ENCODE measurements at regions of chrX and their contacts with region 1.

Region 1: DNA sequence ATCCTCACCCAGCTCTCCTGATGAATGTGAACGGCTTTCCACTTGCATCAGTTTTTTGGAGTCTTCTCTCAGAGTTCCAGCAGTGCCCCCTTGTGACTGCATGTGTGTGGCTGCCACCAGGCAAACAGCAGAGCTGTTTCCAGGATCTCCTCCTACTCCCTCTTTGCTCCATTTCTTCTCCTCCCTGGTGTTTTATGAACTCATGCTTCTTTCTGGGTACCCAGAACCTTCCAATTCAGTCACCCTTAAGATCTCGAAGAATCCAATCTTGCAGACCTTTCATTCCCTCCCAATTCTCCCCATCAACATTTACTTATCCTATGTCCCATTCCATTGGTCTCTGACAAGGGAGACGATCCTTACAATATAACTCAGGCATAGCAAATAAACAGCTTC is 6.8 kb upstream of the TCEANC start:
- DNase-seq: peak; percentile 35
- H3K4me3 Mint-ChIP-seq: no peak overlapping the region
- H3K27ac Mint-ChIP-seq: no peak overlapping the region
- H3K4me1 Mint-ChIP-seq: peaks cover 17% of the 10 kb centered on the region
- H3K27me3 Mint-ChIP-seq: no peaks in the 10 kb centered on the region

Region 2: GRCh38 chrX:13506574-13506973 is 139.6 kb before region 1 on chrX:
- CTCF ChIA-PET with region 1: interaction called, 19 read pairs
- POLR2A ChIA-PET with region 1: no interaction called
- DNase-seq: peak; percentile 57
- H3K4me3 Mint-ChIP-seq: no peak overlapping the region
- H3K27ac Mint-ChIP-seq: no peak overlapping the region
- H3K4me1 Mint-ChIP-seq: peaks cover 8% of the 10 kb centered on the region
- H3K27me3 Mint-ChIP-seq: no peaks in the 10 kb centered on the region

Region 3: GRCh38 chrX:13581554-13581953 is 64.6 kb before region 1 on chrX:
- CTCF ChIA-PET with region 1: no interaction called
- POLR2A ChIA-PET with region 1: no interaction called
- DNase-seq: no peak
- H3K4me3 Mint-ChIP-seq: no peak overlapping the region
- H3K27ac Mint-ChIP-seq: no peak overlapping the region
- H3K4me1 Mint-ChIP-seq: no peaks in the 10 kb centered on the region
- H3K27me3 Mint-ChIP-seq: peaks cover 20% of the 10 kb centered on the region

Region 4: GRCh38 chrX:13658602-13659001 is 12.4 kb after region 1 on chrX:
- CTCF ChIA-PET with region 1: no interaction called
- POLR2A ChIA-PET with region 1: no interaction called
- DNase-seq: no peak
- H3K4me3 Mint-ChIP-seq: no peak overlapping the region
- H3K27ac Mint-ChIP-seq: no peak overlapping the region
- H3K4me1 Mint-ChIP-seq: peaks cover 40% of the 10 kb centered on the region
- H3K27me3 Mint-ChIP-seq: no peaks in the 10 kb centered on the region

Region 5: GRCh38 chrX:13676885-13677284 is 30.7 kb after region 1 on chrX:
- CTCF ChIA-PET with region 1: no interaction called
- POLR2A ChIA-PET with region 1: no interaction called
- DNase-seq: no peak
- H3K4me3 Mint-ChIP-seq: no peak overlapping the region
- H3K27ac Mint-ChIP-seq: no peak overlapping the region
- H3K4me1 Mint-ChIP-seq: peaks cover 3% of the 10 kb centered on the region
- H3K27me3 Mint-ChIP-seq: no peaks in the 10 kb centered on the region